Calu3 (cell line): ENCODE measurements at regions of chr1 and their contacts with region 1.

Region 1: GRCh38 chr1:163361123-163361934 is 39.6 kb downstream of the NUF2 start:
- DNase-seq: peak; percentile 42
- H3K4me3 Mint-ChIP-seq: no peak overlapping the region
- H3K27ac Mint-ChIP-seq: no peak overlapping the region
- H3K4me1 Mint-ChIP-seq: no peaks in the 10 kb centered on the region
- H3K27me3 Mint-ChIP-seq: peaks cover 37% of the 10 kb centered on the region
- CTCF ChIP-seq: peak; percentile 57

Region 2: DNA sequence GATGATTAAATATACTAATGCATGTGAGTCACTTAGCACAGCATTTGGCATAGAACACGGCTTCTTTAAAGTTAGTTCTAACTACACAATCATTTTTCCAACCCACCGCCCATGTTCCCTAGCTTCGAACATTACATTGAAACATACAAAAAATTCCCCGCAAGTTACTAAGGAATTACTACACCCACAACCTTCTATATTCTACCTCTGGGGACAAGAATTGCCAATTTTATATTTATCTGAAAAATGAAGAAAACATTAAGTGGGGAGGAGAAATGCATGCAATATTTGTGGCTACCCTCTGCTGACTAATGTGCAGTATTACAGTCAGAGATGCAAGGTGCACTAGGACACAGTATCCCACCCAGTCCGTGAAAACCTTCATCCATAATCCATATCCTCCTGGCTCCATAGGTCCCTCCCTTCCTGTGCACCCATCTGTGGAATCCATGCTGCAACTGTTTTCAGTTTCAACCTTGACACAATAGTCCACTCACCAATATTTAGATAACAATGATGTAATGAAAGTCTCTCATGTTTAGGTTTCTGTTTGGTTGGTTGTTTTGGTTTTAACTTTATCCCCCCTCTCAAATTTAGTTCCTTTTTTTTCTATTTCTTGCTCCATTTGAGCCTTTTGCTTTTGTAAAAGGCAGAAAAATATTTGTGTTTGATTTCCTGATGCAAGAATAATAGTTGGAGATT is 190.2 kb before region 1 on chr1:
- CTCF ChIA-PET with region 1: no interaction called
- intact Hi-C with region 1: no loop called
- DNase-seq: peak; percentile 4
- H3K4me3 Mint-ChIP-seq: no peak overlapping the region
- H3K27ac Mint-ChIP-seq: no peak overlapping the region
- H3K4me1 Mint-ChIP-seq: peaks cover 58% of the 10 kb centered on the region
- H3K27me3 Mint-ChIP-seq: no peaks in the 10 kb centered on the region
- CTCF ChIP-seq: peak; percentile 71

Region 3: DNA sequence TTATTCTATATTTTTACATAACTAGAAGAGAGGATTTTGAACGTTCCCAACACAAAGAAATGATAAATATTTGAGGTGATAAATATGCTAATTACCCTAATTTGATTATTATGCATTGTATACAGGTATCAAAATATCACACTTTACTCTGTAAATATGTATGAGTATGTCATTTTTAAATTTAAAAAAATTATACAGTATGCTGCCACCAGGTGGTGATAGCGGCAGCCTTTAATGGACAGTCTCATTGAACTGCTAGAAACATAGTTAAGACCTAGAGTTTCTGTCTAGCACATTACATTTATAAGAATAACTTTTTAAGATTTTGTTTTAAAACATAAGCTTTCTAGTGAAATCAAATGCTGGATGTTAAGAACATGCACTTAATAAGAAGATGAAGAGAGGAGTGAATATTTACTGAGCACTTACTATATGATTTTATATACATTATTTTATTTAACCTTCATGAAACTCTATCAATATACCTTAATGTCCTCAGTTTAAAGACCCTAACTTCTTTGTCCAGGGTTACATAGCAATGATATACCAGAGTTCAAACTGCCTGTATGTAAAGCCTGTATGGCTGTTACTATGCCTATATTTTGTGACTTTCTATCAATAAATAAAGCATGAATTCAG is 167.5 kb after region 1 on chr1:
- CTCF ChIA-PET with region 1: no interaction called
- intact Hi-C with region 1: loop called (anchors 1 kb)
- DNase-seq: peak; percentile 48
- H3K4me3 Mint-ChIP-seq: no peak overlapping the region
- H3K27ac Mint-ChIP-seq: no peak overlapping the region
- H3K4me1 Mint-ChIP-seq: no peaks in the 10 kb centered on the region
- H3K27me3 Mint-ChIP-seq: peaks cover 17% of the 10 kb centered on the region
- CTCF ChIP-seq: no peak